Dendritic cell treated with granulocyte-macrophage colony-stimulating factor and Interleukin-4, amounts not matched to agents 40 ng/mL and 50 ng/mL, for 4 days (primary cell): ENCODE measurements at regions of chr10 and their contacts with region 1.

Region 1: DNA sequence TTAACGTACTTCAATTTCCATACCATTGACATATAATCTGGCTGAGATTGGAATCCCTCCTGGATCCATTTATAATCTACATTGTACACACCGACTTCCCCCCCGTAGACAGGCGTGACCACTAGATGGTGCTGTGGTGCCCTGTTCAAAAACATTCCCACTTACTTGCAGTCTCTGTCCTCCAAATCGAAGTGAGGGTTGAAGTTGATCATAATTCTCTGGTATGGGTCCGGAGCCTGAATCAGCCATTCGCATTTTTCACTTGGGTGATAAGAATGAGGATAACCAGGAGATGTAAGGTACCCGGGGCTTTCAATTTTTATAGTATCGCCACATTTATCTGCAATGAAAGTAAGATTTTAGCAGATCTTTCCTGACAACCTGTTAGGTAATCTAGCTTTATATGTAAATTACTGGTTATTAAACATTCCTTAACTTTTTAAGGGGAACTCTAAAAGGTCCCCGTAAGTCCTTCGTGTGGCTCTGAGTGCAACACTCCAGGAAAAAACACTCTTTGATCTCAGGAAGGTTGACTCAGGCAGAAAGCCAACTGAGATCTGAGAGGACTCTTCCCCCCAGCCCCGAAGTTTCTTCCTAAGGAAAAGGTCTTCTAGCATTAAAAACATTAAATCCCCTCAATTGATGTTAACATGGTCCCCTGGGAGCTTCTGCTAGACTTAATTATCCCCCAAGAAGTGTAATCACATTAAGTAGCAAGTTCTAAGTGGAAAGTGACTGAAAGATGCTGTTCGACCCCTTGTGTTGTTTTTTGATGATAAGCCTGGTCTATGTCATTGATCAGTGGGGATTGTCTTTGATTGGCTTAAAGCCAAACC is 3.7 kb downstream of the NRP1 start:
- H3K4me3 Mint-ChIP-seq: peak overlapping the region; percentile 96
- H3K27ac Mint-ChIP-seq: peak overlapping the region; percentile 94
- H3K4me1 Mint-ChIP-seq: peaks cover 26% of the 10 kb centered on the region
- H3K27me3 Mint-ChIP-seq: peaks cover under 1% of the 10 kb centered on the region

Region 2: GRCh38 chr10:31549896-31550295 is 1780.9 kb before region 1 on chr10:
- intact Hi-C with region 1: no loop called
- H3K4me3 Mint-ChIP-seq: no peak overlapping the region
- H3K27ac Mint-ChIP-seq: peak overlapping the region; percentile 4
- H3K4me1 Mint-ChIP-seq: peaks cover 17% of the 10 kb centered on the region
- H3K27me3 Mint-ChIP-seq: no peaks in the 10 kb centered on the region

Region 3: GRCh38 chr10:33355274-33355673 is 24.5 kb after region 1 on chr10:
- intact Hi-C with region 1: loop called (anchors 1 kb)
- H3K4me3 Mint-ChIP-seq: no peak overlapping the region
- H3K27ac Mint-ChIP-seq: no peak overlapping the region
- H3K4me1 Mint-ChIP-seq: peaks cover 11% of the 10 kb centered on the region
- H3K27me3 Mint-ChIP-seq: peaks cover 2% of the 10 kb centered on the region

Region 4: DNA sequence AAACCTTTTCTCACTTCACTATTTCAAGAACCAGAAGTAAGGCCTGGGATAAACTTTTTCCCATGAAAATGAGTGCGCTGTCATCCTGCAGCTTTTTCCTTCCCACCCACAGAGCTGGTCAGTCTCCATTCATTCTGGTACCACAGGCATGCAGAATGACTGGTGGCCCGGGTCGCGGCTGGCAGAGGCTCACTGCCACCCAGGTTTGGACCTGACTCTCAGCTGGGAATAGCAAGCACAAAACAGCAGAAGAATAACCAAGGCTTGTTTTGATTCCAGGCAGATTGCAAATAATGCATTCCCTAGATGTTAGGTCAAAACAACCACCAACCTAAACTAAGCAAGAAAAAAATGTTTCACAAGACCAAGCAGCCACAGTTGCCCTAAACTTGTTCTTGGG is 194.2 kb after region 1 on chr10:
- intact Hi-C with region 1: loop called (anchors 10 kb)
- H3K4me3 Mint-ChIP-seq: no peak overlapping the region
- H3K27ac Mint-ChIP-seq: peak overlapping the region; percentile 58
- H3K4me1 Mint-ChIP-seq: peaks cover 38% of the 10 kb centered on the region
- H3K27me3 Mint-ChIP-seq: peaks cover 16% of the 10 kb centered on the region

Region 5: GRCh38 chr10:33661580-33662336 is 331.0 kb after region 1 on chr10:
- intact Hi-C with region 1: loop called (anchors 5 kb)
- H3K4me3 Mint-ChIP-seq: peak overlapping the region; percentile 44
- H3K27ac Mint-ChIP-seq: peak overlapping the region; percentile 97
- H3K4me1 Mint-ChIP-seq: peaks cover 59% of the 10 kb centered on the region
- H3K27me3 Mint-ChIP-seq: no peaks in the 10 kb centered on the region

Region 6: DNA sequence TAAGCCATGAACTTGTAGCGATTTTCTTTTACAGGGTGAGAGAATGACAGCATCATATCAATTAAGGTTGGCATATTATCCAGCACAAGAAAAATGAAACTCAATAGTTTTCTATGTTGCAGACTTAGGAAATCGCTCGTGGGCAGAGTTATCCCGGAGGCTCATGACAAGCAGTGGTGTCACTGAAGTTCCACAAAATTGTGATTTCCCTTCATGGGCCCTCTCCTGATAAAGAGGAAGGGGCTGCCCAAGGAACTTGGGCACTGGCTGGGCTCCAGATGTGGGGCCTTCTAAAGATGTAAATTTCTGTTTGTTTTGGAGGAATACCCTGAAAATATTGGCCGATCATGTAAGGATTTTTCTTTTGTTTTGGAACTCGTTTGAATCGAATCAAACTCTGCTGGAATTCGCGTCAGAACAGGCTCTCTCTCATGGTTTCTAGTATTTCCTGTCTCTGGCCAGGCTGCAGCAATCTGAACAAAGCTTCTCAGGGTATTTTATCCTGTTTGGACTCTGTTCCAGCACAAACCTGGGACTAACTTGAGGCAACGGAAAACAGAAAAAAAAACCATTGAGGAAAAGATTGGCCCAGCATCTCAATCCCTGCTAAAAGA is 344.3 kb after region 1 on chr10:
- intact Hi-C with region 1: no loop called
- H3K4me3 Mint-ChIP-seq: no peak overlapping the region
- H3K27ac Mint-ChIP-seq: peak overlapping the region; percentile 56
- H3K4me1 Mint-ChIP-seq: peaks cover 18% of the 10 kb centered on the region
- H3K27me3 Mint-ChIP-seq: peaks cover 2% of the 10 kb centered on the region

Region 7: GRCh38 chr10:34637418-34637911 is 1306.7 kb after region 1 on chr10:
- intact Hi-C with region 1: loop called (anchors 1 kb)
- H3K4me3 Mint-ChIP-seq: no peak overlapping the region
- H3K27ac Mint-ChIP-seq: no peak overlapping the region
- H3K4me1 Mint-ChIP-seq: peaks cover 19% of the 10 kb centered on the region
- H3K27me3 Mint-ChIP-seq: peaks cover 7% of the 10 kb centered on the region